ENCODE measurements at regions of chr3 and their contacts with region 1.

Region 1: DNA sequence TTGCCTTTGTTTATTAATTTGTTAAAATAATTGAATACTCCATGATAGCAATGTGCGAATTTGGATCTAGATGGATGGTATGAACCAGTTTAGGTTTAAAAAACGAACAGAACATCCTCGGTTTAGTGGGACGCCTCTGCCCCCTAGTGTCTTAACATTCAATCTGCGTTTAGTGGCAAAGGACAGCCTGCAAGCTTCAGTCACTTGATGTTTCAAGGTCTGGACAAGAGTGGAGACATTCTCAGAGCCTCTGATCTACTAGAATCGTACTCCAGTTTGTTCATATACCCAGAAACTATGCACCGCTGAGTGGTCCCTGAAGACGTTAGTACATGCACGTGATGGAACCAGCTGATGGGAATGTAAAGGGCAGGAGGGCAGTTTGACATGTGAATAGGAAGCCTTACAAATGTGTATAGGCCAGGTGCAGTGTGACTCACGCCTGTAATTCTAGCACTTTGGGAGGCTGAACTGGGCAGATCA is 17.8 kb upstream of the ATP13A4 start:
- DNase-seq: peak; percentile 44 to 74 (median 46)
- ATAC-seq: peak; percentile 94
- H3K4me3 ChIP-seq: no peak overlapping the region
- H3K27ac ChIP-seq: no peak overlapping the region
- H3K4me1 ChIP-seq: no peaks in the 10 kb centered on the region
- H3K27me3 ChIP-seq: peaks cover 0 to 4% of the 10 kb centered on the region in 2 experiments; a peak in 2 of 5 replicates
- CTCF ChIP-seq: peak; percentile 74 to 89 (median 85)
- EP300 ChIP-seq: no peak
- POLR2A ChIP-seq: no peak
- RAD21 ChIP-seq: peak; percentile 81 to 87

Region 2: DNA sequence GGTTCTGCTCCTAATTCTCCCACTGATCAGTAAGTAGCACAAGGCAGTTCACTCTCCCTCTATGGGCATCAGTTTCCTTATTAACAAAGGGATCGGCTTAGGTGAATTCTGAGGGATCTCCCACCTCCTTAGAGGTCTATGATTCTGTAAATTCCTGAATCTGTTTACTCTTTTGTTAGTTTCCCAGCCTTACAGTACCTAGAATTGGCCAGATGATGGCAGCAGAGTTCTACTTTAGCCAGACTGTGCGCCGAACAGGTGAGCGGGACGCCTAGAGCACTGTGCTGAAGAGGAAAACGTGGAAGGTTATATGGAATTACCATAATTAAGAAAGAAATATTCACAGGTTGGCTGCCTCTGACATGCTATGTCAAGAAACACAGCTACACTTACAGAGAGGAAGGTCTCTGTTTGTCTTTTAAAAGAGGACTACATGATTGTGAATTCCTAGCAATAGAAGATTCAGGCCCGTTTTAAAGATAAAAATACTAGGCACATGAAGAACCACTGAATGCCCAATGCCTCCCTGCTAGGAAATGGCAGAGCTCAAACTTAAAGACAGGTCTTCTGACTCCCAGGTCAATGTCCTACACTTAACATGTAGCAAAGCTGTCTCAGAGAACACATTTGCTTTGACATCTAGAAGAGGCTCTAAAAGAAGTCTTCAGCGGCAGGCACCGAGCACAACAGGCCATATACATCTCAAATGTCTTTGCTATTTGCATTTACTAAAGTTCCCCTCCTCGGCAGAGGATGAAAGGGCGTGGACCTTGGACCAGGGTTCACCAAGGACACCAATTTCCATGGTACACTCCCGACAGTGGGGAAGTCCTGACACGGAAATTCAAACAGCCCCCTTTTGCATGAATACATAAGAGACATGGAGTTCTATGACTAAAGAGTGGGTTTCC is 1105.0 kb before region 1 on chr3:
- CTCF ChIA-PET with region 1: no interaction called
- POLR2A ChIA-PET with region 1: no interaction called
- in situ Hi-C with region 1: no loop called
- intact Hi-C with region 1: loop called (anchors 5 kb)
- DNase-seq: peak; percentile 48 to 65 (median 60)
- ATAC-seq: peak; percentile 93
- H3K4me3 ChIP-seq: no peak overlapping the region
- H3K27ac ChIP-seq: no peak overlapping the region
- H3K4me1 ChIP-seq: no peaks in the 10 kb centered on the region
- H3K27me3 ChIP-seq: no peaks in the 10 kb centered on the region
- CTCF ChIP-seq: peak; percentile 59 to 83 (median 78)
- EP300 ChIP-seq: no peak
- POLR2A ChIP-seq: no peak
- RAD21 ChIP-seq: peak; percentile 67 to 75

Region 3: GRCh38 chr3:192566706-192567290 is 1005.7 kb before region 1 on chr3:
- CTCF ChIA-PET with region 1: no interaction called
- POLR2A ChIA-PET with region 1: no interaction called
- in situ Hi-C with region 1: loop called (anchors 25 kb)
- intact Hi-C with region 1: loop called (anchors 5 kb)
- DNase-seq: peak; percentile 38 to 65 (median 53)
- ATAC-seq: peak; percentile 88
- H3K4me3 ChIP-seq: no peak overlapping the region
- H3K27ac ChIP-seq: no peak overlapping the region
- H3K4me1 ChIP-seq: no peaks in the 10 kb centered on the region
- H3K27me3 ChIP-seq: no peaks in the 10 kb centered on the region
- CTCF ChIP-seq: peak; percentile 37 to 80 (median 79); a peak in 5 of 6 replicates
- EP300 ChIP-seq: no peak
- POLR2A ChIP-seq: no peak
- RAD21 ChIP-seq: peak; percentile 75 to 90

Region 4: DNA sequence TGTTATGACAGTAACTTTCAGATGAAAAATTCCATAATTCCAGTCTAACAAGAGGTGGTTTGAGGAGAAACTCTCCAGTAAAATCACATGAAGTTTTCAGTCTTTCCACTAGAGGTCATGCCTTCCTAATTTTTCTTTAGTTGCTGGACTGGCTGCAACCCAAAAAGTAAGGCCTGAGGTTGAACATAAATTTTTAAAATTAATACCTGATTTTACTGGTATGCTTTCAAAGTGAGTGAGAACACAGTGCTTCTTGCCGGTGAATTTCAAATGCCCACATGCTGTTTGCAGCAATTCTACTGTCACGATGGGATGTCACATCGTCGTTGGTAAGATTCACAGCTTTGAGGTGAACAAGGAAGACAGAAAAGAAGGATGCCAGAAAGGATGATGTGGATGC is 756.1 kb before region 1 on chr3:
- CTCF ChIA-PET with region 1: interaction called, 12 read pairs
- POLR2A ChIA-PET with region 1: no interaction called
- in situ Hi-C with region 1: loop called (anchors 10 kb)
- intact Hi-C with region 1: loop called (anchors 1 kb)
- DNase-seq: peak; percentile 17 to 36 (median 23)
- ATAC-seq: peak; percentile 63; the same call in 2 of the 3 replicates
- H3K4me3 ChIP-seq: no peak overlapping the region
- H3K27ac ChIP-seq: no peak overlapping the region
- H3K4me1 ChIP-seq: no peaks in the 10 kb centered on the region
- H3K27me3 ChIP-seq: peaks cover 0 to 4% of the 10 kb centered on the region in 2 experiments; a peak in 1 of 5 replicates
- CTCF ChIP-seq: peak; percentile 43 to 71 (median 58); a peak in 4 of 6 replicates
- EP300 ChIP-seq: no peak
- POLR2A ChIP-seq: no peak
- RAD21 ChIP-seq: peak; percentile 78 to 79

Region 5: DNA sequence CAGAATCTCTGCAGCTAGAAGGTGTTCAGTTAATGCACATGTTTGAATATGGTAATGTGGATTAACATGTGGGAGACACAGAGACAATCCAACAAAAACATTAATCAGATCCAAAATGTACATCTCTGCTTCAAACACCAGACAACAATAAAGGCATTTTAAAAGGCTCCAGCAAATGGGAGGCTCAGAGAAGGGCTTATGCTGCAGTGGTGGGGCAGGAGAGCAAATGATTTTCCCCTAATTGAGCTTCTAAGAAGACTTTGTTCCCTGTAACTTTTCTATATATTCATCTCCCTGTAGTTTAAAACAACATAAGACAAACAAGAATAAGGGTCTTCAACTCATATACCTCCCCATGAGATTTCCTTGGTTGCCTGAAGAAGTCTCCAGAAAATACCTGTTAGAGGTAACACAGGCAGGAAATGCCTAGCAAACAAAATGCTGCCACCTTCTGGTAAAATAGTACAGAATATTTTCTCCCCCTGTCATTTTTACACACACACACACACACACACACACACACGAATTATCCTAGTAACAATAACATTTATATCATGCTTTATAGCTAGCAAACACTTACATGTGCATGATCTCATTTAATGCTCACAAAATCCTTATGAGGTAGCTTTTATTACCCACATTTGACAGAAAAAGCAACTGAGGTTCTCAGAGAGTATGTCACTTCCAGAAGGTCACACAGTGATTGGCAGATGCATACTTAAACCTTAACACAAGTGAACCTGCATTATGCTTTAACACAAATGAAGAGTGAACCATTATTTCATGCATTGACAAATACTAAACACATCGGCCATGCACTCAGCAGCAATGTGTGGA is 531.4 kb before region 1 on chr3:
- CTCF ChIA-PET with region 1: no interaction called
- POLR2A ChIA-PET with region 1: no interaction called
- in situ Hi-C with region 1: no loop called
- intact Hi-C with region 1: loop called (anchors 5 kb)
- DNase-seq: peak; percentile 11 to 24 (median 14)
- ATAC-seq: peak; percentile 55; the same call in 2 of the 3 replicates
- H3K4me3 ChIP-seq: no peak overlapping the region
- H3K27ac ChIP-seq: no peak overlapping the region
- H3K4me1 ChIP-seq: no peaks in the 10 kb centered on the region
- H3K27me3 ChIP-seq: no peaks in the 10 kb centered on the region
- CTCF ChIP-seq: peak; percentile 10 to 47 (median 28); a peak in 2 of 6 replicates
- EP300 ChIP-seq: no peak
- POLR2A ChIP-seq: no peak
- RAD21 ChIP-seq: peak; percentile 35 to 59; a peak in 3 of 4 replicates

Region 6: GRCh38 chr3:193190146-193190786 is 382.2 kb before region 1 on chr3:
- CTCF ChIA-PET with region 1: no interaction called
- POLR2A ChIA-PET with region 1: no interaction called
- in situ Hi-C with region 1: no loop called
- intact Hi-C with region 1: loop called (anchors 5 kb)
- DNase-seq: peak in 3 of 4 experiments; percentile 12 to 24 (median 19)
- ATAC-seq: peak; percentile 65
- H3K4me3 ChIP-seq: no peak overlapping the region
- H3K27ac ChIP-seq: no peak overlapping the region
- H3K4me1 ChIP-seq: no peaks in the 10 kb centered on the region
- H3K27me3 ChIP-seq: no peaks in the 10 kb centered on the region
- CTCF ChIP-seq: peak in 2 of 3 experiments; percentile 34 to 41; a peak in 3 of 6 replicates
- EP300 ChIP-seq: no peak
- POLR2A ChIP-seq: no peak
- RAD21 ChIP-seq: peak in 1 of 2 experiments; percentile 30; a peak in 1 of 4 replicates

Region 7: GRCh38 chr3:193465992-193466608 is 106.4 kb before region 1 on chr3:
- CTCF ChIA-PET with region 1: interaction called, 12 read pairs
- POLR2A ChIA-PET with region 1: no interaction called
- in situ Hi-C with region 1: no loop called
- intact Hi-C with region 1: loop called (anchors 1 kb)
- DNase-seq: no peak
- ATAC-seq: no peak
- H3K4me3 ChIP-seq: no peak overlapping the region
- H3K27ac ChIP-seq: no peak overlapping the region
- H3K4me1 ChIP-seq: no peaks in the 10 kb centered on the region
- H3K27me3 ChIP-seq: no peaks in the 10 kb centered on the region; a peak in 2 of 5 replicates
- CTCF ChIP-seq: no peak
- EP300 ChIP-seq: no peak
- POLR2A ChIP-seq: no peak
- RAD21 ChIP-seq: no peak